ENCODE measurements at regions of chr7 and their contacts with region 1.

Region 1: GRCh38 chr7:128883622-128884501 is 21.2 kb downstream of the ATP6V1F start:
- DNase-seq: peak; percentile 84
- H3K4me3 Mint-ChIP-seq: no peak overlapping the region
- H3K27ac Mint-ChIP-seq: no peak overlapping the region
- H3K4me1 Mint-ChIP-seq: peaks cover 7% of the 10 kb centered on the region
- H3K27me3 Mint-ChIP-seq: peaks cover 3% of the 10 kb centered on the region

Region 2: GRCh38 chr7:128841921-128842651 is 41.8 kb before region 1 on chr7:
- CTCF ChIA-PET with region 1: interaction called, 32 read pairs
- POLR2A ChIA-PET with region 1: no interaction called
- DNase-seq: peak; percentile 63
- H3K4me3 Mint-ChIP-seq: no peak overlapping the region
- H3K27ac Mint-ChIP-seq: no peak overlapping the region
- H3K4me1 Mint-ChIP-seq: no peaks in the 10 kb centered on the region
- H3K27me3 Mint-ChIP-seq: no peaks in the 10 kb centered on the region

Region 3: DNA sequence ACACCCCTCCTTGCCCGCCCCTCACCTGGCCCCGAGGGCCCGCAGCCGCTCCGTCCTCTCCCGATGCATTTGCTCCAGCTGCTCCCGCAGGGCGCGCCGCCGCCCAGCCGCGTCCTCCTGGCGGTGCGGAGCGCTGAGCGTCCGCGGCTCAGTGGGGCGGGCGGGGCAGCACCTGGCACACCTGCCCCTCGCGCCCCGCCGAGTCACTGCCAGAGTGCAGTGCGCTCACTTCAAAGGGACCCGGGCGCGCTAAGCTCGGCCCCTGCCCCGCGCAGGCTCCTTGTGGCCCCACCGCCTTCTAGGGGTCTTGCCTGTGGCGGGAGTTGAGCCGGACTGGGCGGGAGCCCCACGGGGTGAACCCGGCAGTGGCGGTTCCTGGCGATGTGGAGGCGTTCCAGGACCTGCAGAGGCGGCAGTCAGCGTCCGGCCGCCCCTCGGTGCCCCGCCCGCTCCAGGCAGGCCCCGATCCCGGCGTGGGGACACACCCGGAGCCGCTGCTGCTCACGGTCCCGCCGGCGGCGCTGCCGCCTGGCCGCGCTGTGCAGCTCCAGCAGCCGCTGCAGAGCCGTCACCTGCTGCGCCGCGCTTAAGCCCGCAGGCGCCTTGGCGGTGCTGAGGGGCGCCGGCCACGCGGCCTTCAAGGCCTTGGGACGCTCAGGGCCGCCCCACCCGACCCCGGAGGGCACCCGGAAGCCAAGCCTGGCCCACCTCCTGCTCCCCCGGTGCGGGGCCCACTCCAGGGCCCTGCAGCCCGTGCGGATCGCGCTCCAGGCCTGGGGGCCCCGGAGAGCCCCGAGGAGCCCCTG is 14.5 kb before region 1 on chr7:
- CTCF ChIA-PET with region 1: interaction called, 28 read pairs
- POLR2A ChIA-PET with region 1: interaction called, 4 read pairs
- DNase-seq: peak; percentile 48
- H3K4me3 Mint-ChIP-seq: peak overlapping the region; percentile 52
- H3K27ac Mint-ChIP-seq: no peak overlapping the region
- H3K4me1 Mint-ChIP-seq: peaks cover 14% of the 10 kb centered on the region
- H3K27me3 Mint-ChIP-seq: peaks cover 25% of the 10 kb centered on the region

Measured in activated CD4-positive, alpha-beta memory T cell treated with anti-CD3 and anti-CD28 coated beads, Interleukin-2, amount 10 ng/mL, durations not matched to agents 7 days and 5 days (primary cell).